ENCODE measurements at regions of chr6 and their contacts with region 1.

Region 1: GRCh38 chr6:31580807-31581433 is 1.3 kb downstream of the LTB start:
- DNase-seq: peak; percentile 94
- ATAC-seq: peak; percentile 67
- H3K4me3 Mint-ChIP-seq: peak overlapping the region; percentile 97
- H3K27ac Mint-ChIP-seq: peak overlapping the region; percentile 97
- H3K4me1 Mint-ChIP-seq: peaks cover 56% of the 10 kb centered on the region
- H3K27me3 Mint-ChIP-seq: no peaks in the 10 kb centered on the region

Region 2: GRCh38 chr6:31559958-31560696 is 20.8 kb before region 1 on chr6:
- CTCF ChIA-PET with region 1: interaction called, 873 read pairs
- POLR2A ChIA-PET with region 1: interaction called, 43 read pairs
- intact Hi-C with region 1: no loop called
- DNase-seq: peak; percentile 80
- ATAC-seq: peak; percentile 72
- H3K4me3 Mint-ChIP-seq: peak overlapping the region; percentile 66
- H3K27ac Mint-ChIP-seq: peak overlapping the region; percentile 92
- H3K4me1 Mint-ChIP-seq: peaks cover 81% of the 10 kb centered on the region
- H3K27me3 Mint-ChIP-seq: peaks cover 3% of the 10 kb centered on the region

Region 3: GRCh38 chr6:31568537-31568961 is 12.4 kb before region 1 on chr6:
- CTCF ChIA-PET with region 1: interaction called, 873 read pairs
- POLR2A ChIA-PET with region 1: interaction called, 4 read pairs
- intact Hi-C with region 1: loop called in 1 of 2 experiments (anchors 1 kb)
- DNase-seq: peak; percentile 83
- ATAC-seq: peak; percentile 60
- H3K4me3 Mint-ChIP-seq: peak overlapping the region; percentile 58
- H3K27ac Mint-ChIP-seq: peak overlapping the region; percentile 89
- H3K4me1 Mint-ChIP-seq: peaks cover 86% of the 10 kb centered on the region
- H3K27me3 Mint-ChIP-seq: peaks cover 3% of the 10 kb centered on the region

Region 4: GRCh38 chr6:31888276-31889258 is 307.6 kb after region 1 on chr6:
- CTCF ChIA-PET with region 1: no interaction called
- POLR2A ChIA-PET with region 1: no interaction called
- intact Hi-C with region 1: no loop called
- DNase-seq: peak; percentile 79
- ATAC-seq: no peak
- H3K4me3 Mint-ChIP-seq: no peak overlapping the region
- H3K27ac Mint-ChIP-seq: no peak overlapping the region
- H3K4me1 Mint-ChIP-seq: no peaks in the 10 kb centered on the region
- H3K27me3 Mint-ChIP-seq: no peaks in the 10 kb centered on the region

Measured in activated CD4-positive, alpha-beta T cell treated with anti-CD3 and anti-CD28 coated beads for 36 hours (primary cell).